Common myeloid progenitor, CD34-positive (primary cell): ENCODE measurements at regions of chr19 and their contacts with region 1.

Region 1: DNA sequence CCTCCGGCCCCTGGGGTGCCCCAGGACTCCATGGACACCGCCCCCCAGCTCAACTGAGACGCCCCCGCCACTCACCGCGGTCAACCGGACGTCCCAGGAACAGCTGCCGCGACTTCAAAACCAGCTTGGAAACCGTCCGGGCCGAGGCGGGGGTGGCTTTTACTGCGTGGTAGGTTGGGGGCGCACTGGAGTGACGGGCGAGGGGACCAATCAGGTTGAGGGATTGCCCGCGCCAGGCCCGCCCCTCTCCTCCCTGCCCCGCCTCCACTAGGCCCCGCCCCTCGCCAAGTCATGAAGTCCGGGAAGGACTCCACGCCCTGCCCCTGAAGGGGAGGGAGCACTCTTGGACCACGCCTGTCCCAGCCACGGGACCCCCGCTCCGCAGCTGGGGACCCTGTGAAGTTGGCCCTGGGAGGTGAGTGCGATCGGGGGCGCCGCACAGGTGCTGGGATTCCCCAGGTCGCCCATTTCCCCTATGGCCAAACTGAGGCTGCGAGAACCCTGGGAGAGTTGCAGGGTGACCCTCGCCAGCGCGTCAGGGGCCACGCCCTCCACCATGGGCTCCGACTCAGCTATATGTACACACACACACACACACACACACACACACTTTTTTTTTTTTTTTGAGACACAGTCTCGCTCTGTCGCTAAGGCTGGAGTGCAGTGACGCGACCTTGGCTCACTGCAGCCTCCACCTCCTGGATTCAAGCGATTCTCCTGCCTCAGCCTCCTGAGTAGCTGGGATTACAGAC is at the start of gene PLIN3:
- DNase-seq: peak; percentile 93 to 95 (median 95)
- H3K4me3 ChIP-seq: peak within 1 kb of the TSS; percentile 49 to 95 (median 85)
- H3K27ac ChIP-seq: peak within 1 kb of the TSS; percentile 74 to 91
- H3K4me1 ChIP-seq: peaks cover 0 to 28% (median 17%) of the 10 kb centered on the region in 4 experiments
- H3K27me3 ChIP-seq: no peaks in the 10 kb centered on the region

Region 2: GRCh38 chr19:4851551-4852290 is 16.0 kb before region 1 on chr19:
- CTCF ChIA-PET with region 1: interaction called, 31 read pairs
- POLR2A ChIA-PET with region 1: interaction called, 5 read pairs
- DNase-seq: peak; percentile 55 to 75 (median 65)
- H3K4me3 ChIP-seq: no peak overlapping the region
- H3K27ac ChIP-seq: no peak overlapping the region
- H3K4me1 ChIP-seq: no peaks in the 10 kb centered on the region
- H3K27me3 ChIP-seq: no peaks in the 10 kb centered on the region

Region 3: DNA sequence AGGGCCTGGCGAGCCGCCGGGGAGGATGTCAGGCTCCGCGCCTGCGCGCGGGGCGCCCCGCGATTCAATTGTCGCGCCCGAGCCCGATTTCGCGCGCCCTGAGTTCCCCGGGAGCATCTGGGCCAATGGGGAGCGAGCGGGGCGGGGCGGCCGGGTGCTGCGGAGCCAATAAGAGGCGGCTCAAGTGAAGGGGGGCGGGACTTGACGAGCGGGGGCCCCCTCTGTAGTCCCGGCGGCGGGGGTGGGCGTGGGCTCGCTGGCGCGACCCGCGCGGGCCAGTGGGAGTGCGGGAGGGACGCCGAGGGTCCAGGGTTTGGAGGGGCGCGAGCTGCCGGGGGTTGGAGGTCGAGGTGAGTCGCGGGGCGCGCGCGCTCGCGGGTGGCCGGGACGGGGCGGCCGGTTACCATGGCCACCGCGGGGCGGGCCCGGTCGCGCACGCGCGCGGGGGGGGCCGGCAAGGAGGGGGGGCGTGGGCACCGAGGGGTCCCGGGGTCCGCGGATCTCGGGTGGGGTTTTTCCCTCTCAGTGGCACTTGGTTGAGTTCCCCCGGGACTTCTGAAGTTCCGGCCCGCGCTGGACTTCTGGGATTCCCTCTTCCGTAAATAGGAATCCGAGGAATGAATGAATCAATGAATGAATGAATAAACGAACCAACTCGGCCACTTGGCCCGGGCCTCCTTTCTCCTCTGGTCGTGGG is 42.3 kb after region 1 on chr19:
- CTCF ChIA-PET with region 1: interaction called, 78 read pairs
- POLR2A ChIA-PET with region 1: interaction called, 8 read pairs
- DNase-seq: peak; percentile 86 to 93 (median 91)
- H3K4me3 ChIP-seq: peak overlapping the region; percentile 33 to 85 (median 71)
- H3K27ac ChIP-seq: no peak overlapping the region
- H3K4me1 ChIP-seq: peaks cover 14 to 56% (median 46%) of the 10 kb centered on the region in 4 experiments
- H3K27me3 ChIP-seq: no peaks in the 10 kb centered on the region

Region 4: GRCh38 chr19:5031231-5032100 is 163.8 kb after region 1 on chr19:
- CTCF ChIA-PET with region 1: interaction called, 43 read pairs
- POLR2A ChIA-PET with region 1: no interaction called
- DNase-seq: peak; percentile 71 to 78 (median 71)
- H3K4me3 ChIP-seq: no peak overlapping the region
- H3K27ac ChIP-seq: no peak overlapping the region
- H3K4me1 ChIP-seq: peaks cover 0 to 7% (median 5%) of the 10 kb centered on the region in 4 experiments
- H3K27me3 ChIP-seq: no peaks in the 10 kb centered on the region